Activated CD4-positive, alpha-beta T cell treated with anti-CD3 and anti-CD28 coated beads, Interleukin-2, amount 10 ng/mL, durations not matched to agents 24 days and 14 days (primary cell): ENCODE measurements at regions of chr21 and their contacts with region 1.

Region 1: GRCh38 chr21:42381334-42381984 is 14.4 kb downstream of the TMPRSS3 start:
- DNase-seq: peak; percentile 75
- H3K4me3 Mint-ChIP-seq: no peak overlapping the region
- H3K27ac Mint-ChIP-seq: no peak overlapping the region
- H3K4me1 Mint-ChIP-seq: peaks cover 13% of the 10 kb centered on the region
- H3K27me3 Mint-ChIP-seq: no peaks in the 10 kb centered on the region

Region 2: GRCh38 chr21:42400525-42400924 is 19.1 kb after region 1 on chr21:
- intact Hi-C with region 1: loop called (anchors 2 kb)
- DNase-seq: peak; percentile 76
- H3K4me3 Mint-ChIP-seq: peak overlapping the region; percentile 63
- H3K27ac Mint-ChIP-seq: peak overlapping the region; percentile 74
- H3K4me1 Mint-ChIP-seq: peaks cover 48% of the 10 kb centered on the region
- H3K27me3 Mint-ChIP-seq: no peaks in the 10 kb centered on the region

Region 3: GRCh38 chr21:42440187-42440792 is 58.8 kb after region 1 on chr21:
- intact Hi-C with region 1: no loop called
- DNase-seq: no peak
- H3K4me3 Mint-ChIP-seq: peak overlapping the region; percentile 69
- H3K27ac Mint-ChIP-seq: peak overlapping the region; percentile 92
- H3K4me1 Mint-ChIP-seq: peaks cover 46% of the 10 kb centered on the region
- H3K27me3 Mint-ChIP-seq: no peaks in the 10 kb centered on the region